Sigmoid colon (tissue), 7 donors: ENCODE measurements at regions of chr6 and their contacts with region 1.

Region 1: GRCh38 chr6:35522660-35523658 is 10.3 kb upstream of the TULP1 start:
- DNase-seq: peak; percentile 88
- H3K4me3 ChIP-seq: peak overlapping the region in 1 of 4 donors; percentile 26
- H3K27ac ChIP-seq: no peak overlapping the region
- H3K4me1 ChIP-seq: peaks cover 0 to 9% (median 2%) of the 10 kb centered on the region in 4 donors
- H3K27me3 ChIP-seq: no peaks in the 10 kb centered on the region
- CTCF ChIP-seq: peak; percentile 89 to 100 (median 96)
- EP300 ChIP-seq: no peak
- POLR2A ChIP-seq: no peak

Region 2: GRCh38 chr6:35624341-35625070 is 101.5 kb after region 1 on chr6:
- intact Hi-C with region 1: loop called (anchors 10 kb)
- DNase-seq: no peak
- H3K4me3 ChIP-seq: no peak overlapping the region
- H3K27ac ChIP-seq: peak overlapping the region in 2 of 4 donors; percentile 7 to 42
- H3K4me1 ChIP-seq: peaks cover 0 to 6% (median 0%) of the 10 kb centered on the region in 4 donors
- H3K27me3 ChIP-seq: no peaks in the 10 kb centered on the region
- CTCF ChIP-seq: no peak
- EP300 ChIP-seq: no peak
- POLR2A ChIP-seq: no peak

Region 3: DNA sequence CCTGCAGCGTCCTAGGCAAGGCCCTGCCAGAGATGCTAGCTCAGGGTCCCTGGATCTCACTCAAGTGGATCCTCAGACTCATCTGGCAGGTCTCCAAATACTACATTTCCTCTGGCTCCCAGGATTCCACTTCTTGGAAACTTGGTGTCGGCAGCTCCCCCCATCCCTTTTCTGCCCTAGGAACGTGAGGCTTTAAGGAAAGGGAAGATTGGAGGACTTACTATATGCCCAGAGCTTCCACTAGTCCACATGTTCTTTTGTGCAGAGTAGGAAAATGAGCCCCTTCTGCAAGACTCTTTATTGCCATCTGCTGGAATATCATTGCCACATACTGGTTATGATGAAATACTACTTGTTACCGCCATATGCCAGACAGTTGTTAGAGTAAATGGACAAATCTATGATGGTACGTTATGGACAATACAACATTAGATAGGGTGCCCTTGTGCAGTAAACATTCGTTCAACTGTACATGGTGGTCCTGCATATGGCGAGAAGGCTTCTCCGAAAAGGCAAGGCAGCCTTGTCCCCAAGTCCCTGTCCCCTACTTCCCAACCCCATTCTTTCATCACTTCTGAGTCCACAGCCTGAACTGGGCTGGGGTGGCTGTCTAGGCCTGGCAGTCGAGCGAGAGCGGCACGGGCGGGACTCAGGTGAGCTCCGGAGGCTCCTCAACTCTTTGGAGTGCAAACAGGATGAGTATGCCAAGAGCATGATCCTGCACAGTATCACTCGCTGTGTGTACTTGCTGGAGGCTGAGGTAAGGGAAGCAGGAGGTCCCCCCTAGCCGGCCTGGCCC is 214.7 kb after region 1 on chr6:
- intact Hi-C with region 1: loop called (anchors 1 kb)
- DNase-seq: no peak
- H3K4me3 ChIP-seq: no peak overlapping the region
- H3K27ac ChIP-seq: peak overlapping the region in 1 of 4 donors; percentile 19
- H3K4me1 ChIP-seq: peaks cover 3 to 40% (median 32%) of the 10 kb centered on the region in 4 donors
- H3K27me3 ChIP-seq: no peaks in the 10 kb centered on the region
- CTCF ChIP-seq: peak; percentile 90 to 96 (median 95)
- EP300 ChIP-seq: no peak
- POLR2A ChIP-seq: no peak